CD8-positive, alpha-beta T cell (primary cell): ENCODE measurements at regions of chr14 and their contacts with region 1.

Region 1: DNA sequence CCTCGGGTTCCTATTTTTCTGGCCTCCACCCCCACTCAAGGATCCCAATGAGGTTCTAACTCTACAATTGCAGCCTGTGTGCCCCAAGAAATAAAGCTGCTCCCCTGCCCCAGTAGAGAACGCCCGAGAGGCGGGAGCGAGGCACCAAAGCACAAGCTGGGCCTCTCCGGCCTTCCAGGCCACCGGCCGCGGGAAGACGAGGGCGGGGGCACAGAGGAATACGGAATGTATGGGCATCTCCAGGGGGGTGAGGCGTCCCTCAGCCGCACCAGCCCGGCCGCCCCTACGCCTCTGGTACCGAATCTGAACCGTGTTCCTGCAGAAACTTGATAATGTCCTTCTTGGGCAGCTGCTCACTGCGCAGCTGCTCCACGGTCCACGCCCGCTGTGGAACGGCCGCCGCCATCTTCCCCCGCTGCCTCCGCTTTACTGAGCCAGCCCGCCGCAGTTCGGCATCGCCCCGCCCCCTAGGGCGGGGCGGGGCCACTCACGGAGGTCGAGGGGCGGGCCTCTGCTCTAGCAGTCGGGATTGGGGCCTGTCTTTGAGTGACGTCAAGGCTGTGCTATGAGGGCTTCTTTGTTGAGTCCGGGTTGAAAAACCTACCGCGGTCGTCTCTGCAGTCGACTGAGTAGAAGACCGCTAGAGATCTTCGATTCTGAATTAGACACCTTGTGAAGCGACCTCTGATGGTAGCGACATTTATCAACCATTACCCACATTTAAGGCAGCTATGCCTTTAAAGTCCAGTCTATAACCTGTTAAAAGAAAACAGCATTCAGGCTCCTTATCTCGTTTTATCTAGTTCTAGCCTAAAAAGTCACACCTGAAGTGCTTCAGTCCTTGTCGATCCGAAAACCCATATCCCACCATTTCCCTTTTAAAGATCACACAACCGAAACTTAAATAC is at the start of gene FKBP3:
- DNase-seq: peak; percentile 90 to 99 (median 95)
- ATAC-seq: peak; percentile 91
- H3K4me3 ChIP-seq: peak within 1 kb of the TSS; percentile 84 to 98
- H3K4me3 Mint-ChIP-seq: peak within 1 kb of the TSS; percentile 97
- H3K27ac ChIP-seq: peak within 1 kb of the TSS; percentile 84 to 92
- H3K27ac Mint-ChIP-seq: peak within 1 kb of the TSS; percentile 98
- H3K4me1 ChIP-seq: peaks cover 31% of the 10 kb centered on the region
- H3K4me1 Mint-ChIP-seq: peaks cover 48% of the 10 kb centered on the region
- H3K27me3 ChIP-seq: no peaks in the 10 kb centered on the region
- H3K27me3 Mint-ChIP-seq: no peaks in the 10 kb centered on the region
- CTCF ChIP-seq: no peak
- total RNA-seq, gene FKBP3: 32.1 to 32.3 TPM

Region 2: GRCh38 chr14:45083971-45084722 is 50.2 kb before region 1 on chr14 and contains the start of gene PRPF39:
- CTCF ChIA-PET with region 1: interaction called, 3 read pairs
- POLR2A ChIA-PET with region 1: interaction called, 5 read pairs
- intact Hi-C with region 1: loop called (anchors 1 kb)
- DNase-seq: peak; percentile 89 to 98 (median 94)
- ATAC-seq: peak; percentile 91
- H3K4me3 ChIP-seq: peak within 1 kb of the TSS; percentile 78 to 93
- H3K4me3 Mint-ChIP-seq: peak within 1 kb of the TSS; percentile 94
- H3K27ac ChIP-seq: peak within 1 kb of the TSS; percentile 82 to 84
- H3K27ac Mint-ChIP-seq: peak within 1 kb of the TSS; percentile 95
- H3K4me1 ChIP-seq: peaks cover 47% of the 10 kb centered on the region
- H3K4me1 Mint-ChIP-seq: peaks cover 55% of the 10 kb centered on the region
- H3K27me3 ChIP-seq: no peaks in the 10 kb centered on the region
- H3K27me3 Mint-ChIP-seq: no peaks in the 10 kb centered on the region
- CTCF ChIP-seq: no peak
- total RNA-seq, gene PRPF39: 64.5 to 64.7 TPM